Endothelial cell of umbilical vein (primary cell): ENCODE measurements at regions of chr1 and their contacts with region 1.

Region 1: GRCh38 chr1:86696522-86696921 is 7.9 kb upstream of the SH3GLB1 start:
- DNase-seq: peak; percentile 90
- H3K4me3 ChIP-seq: peak overlapping the region in 1 of 3 experiments; percentile 33
- H3K27ac ChIP-seq: peak overlapping the region; percentile 84
- H3K4me1 ChIP-seq: peaks cover 26% of the 10 kb centered on the region
- H3K27me3 ChIP-seq: no peaks in the 10 kb centered on the region
- CTCF ChIP-seq: no peak
- POLR2A ChIP-seq: no peak

Region 2: DNA sequence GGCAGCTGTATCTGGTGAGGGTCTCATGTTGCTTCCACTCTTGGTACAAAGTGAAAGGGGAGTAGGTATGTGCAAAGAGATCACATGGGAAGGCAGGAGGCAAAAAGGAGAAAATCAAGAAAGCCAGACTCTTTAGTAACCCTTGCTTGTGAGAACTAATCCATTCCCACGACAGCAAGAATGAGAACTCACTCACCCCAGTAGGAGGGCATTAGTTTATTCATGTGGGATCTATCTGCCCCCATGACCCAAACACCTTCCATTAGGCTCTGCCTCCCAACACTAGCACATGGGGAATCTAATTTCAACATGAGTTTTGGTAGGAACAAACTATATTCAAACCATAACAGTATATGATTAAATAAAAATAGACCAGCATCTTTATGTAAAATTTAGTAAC is 1045.9 kb before region 1 on chr1:
- CTCF ChIA-PET with region 1: no interaction called
- POLR2A ChIA-PET with region 1: no interaction called
- dilution Hi-C with region 1: no loop called
- intact Hi-C with region 1: no loop called
- DNase-seq: no peak
- H3K4me3 ChIP-seq: no peak overlapping the region
- H3K27ac ChIP-seq: no peak overlapping the region
- H3K4me1 ChIP-seq: peaks cover 12% of the 10 kb centered on the region
- H3K27me3 ChIP-seq: no peaks in the 10 kb centered on the region
- CTCF ChIP-seq: no peak
- POLR2A ChIP-seq: no peak

Region 3: GRCh38 chr1:86648255-86648654 is 48.3 kb before region 1 on chr1:
- CTCF ChIA-PET with region 1: no interaction called
- POLR2A ChIA-PET with region 1: no interaction called
- dilution Hi-C with region 1: no loop called
- intact Hi-C with region 1: loop called (anchors 10 kb)
- DNase-seq: peak; percentile 79
- H3K4me3 ChIP-seq: no peak overlapping the region
- H3K27ac ChIP-seq: no peak overlapping the region
- H3K4me1 ChIP-seq: peaks cover 8% of the 10 kb centered on the region
- H3K27me3 ChIP-seq: no peaks in the 10 kb centered on the region
- CTCF ChIP-seq: no peak
- POLR2A ChIP-seq: no peak

Region 4: GRCh38 chr1:86774305-86775295 is 78.1 kb after region 1 on chr1:
- CTCF ChIA-PET with region 1: no interaction called
- POLR2A ChIA-PET with region 1: no interaction called
- dilution Hi-C with region 1: no loop called
- intact Hi-C with region 1: loop called (anchors 2 kb)
- DNase-seq: peak; percentile 85
- H3K4me3 ChIP-seq: peak overlapping the region in 1 of 3 experiments; percentile 50
- H3K27ac ChIP-seq: peak overlapping the region; percentile 81
- H3K4me1 ChIP-seq: peaks cover 42% of the 10 kb centered on the region
- H3K27me3 ChIP-seq: no peaks in the 10 kb centered on the region
- CTCF ChIP-seq: no peak
- POLR2A ChIP-seq: no peak

Region 5: GRCh38 chr1:86926883-86927282 is 230.4 kb after region 1 on chr1:
- CTCF ChIA-PET with region 1: no interaction called
- POLR2A ChIA-PET with region 1: no interaction called
- dilution Hi-C with region 1: no loop called
- intact Hi-C with region 1: no loop called
- DNase-seq: no peak
- H3K4me3 ChIP-seq: no peak overlapping the region
- H3K27ac ChIP-seq: no peak overlapping the region
- H3K4me1 ChIP-seq: no peaks in the 10 kb centered on the region
- H3K27me3 ChIP-seq: no peaks in the 10 kb centered on the region
- CTCF ChIP-seq: no peak
- POLR2A ChIP-seq: no peak

Region 6: GRCh38 chr1:86948212-86948611 is 251.7 kb after region 1 on chr1:
- CTCF ChIA-PET with region 1: no interaction called
- POLR2A ChIA-PET with region 1: no interaction called
- dilution Hi-C with region 1: no loop called
- intact Hi-C with region 1: no loop called
- DNase-seq: no peak
- H3K4me3 ChIP-seq: no peak overlapping the region
- H3K27ac ChIP-seq: no peak overlapping the region
- H3K4me1 ChIP-seq: no peaks in the 10 kb centered on the region
- H3K27me3 ChIP-seq: no peaks in the 10 kb centered on the region
- CTCF ChIP-seq: no peak
- POLR2A ChIP-seq: no peak

Region 7: GRCh38 chr1:87426463-87427249 is 730.1 kb after region 1 on chr1:
- CTCF ChIA-PET with region 1: no interaction called
- POLR2A ChIA-PET with region 1: no interaction called
- dilution Hi-C with region 1: no loop called
- intact Hi-C with region 1: no loop called
- DNase-seq: no peak
- H3K4me3 ChIP-seq: no peak overlapping the region
- H3K27ac ChIP-seq: no peak overlapping the region
- H3K4me1 ChIP-seq: no peaks in the 10 kb centered on the region
- H3K27me3 ChIP-seq: no peaks in the 10 kb centered on the region
- CTCF ChIP-seq: no peak
- POLR2A ChIP-seq: no peak